OCI-LY7 (cell line): ENCODE measurements at regions of chr9 and their contacts with region 1.

Region 1: DNA sequence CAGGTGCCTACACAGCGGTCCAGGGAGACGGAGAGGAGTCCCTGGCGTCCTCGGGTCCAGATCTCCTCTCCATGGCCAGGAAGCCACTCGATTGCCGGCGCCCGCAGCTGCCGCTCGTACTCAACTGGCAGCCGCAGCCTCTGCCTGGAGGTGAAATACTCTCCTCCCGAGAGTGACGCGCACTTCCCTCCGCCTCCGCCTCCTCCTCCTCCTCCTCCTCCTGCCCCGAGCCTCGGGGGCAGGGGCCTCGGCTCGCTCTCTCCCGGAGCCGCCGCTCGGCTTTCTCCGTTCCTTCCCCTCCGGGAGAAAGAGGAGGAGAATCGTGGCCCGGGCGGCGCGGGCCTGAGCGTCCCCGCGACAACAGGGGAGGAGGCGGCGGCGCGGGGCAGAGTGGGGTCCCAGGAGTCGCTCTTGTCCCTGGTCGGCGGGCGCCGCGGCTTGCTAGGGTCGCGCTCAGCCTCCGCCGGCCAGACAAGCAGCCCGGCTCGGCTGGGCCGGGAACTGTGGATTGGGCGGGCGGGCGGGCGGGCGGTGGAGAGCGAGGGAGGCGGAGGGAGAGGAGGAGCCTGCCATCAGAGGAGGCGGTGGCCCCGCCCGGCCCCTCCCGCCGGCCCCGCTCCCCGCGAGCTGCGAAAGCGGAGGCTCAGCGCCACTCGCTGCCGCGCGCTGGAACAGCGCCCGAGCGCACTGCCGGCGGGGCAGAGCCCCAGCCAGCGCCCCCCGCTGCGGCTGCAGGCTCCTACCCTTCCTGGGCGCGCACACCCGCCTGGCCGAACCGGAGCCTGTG is at the start of gene CEMIP2:
- DNase-seq: peak; percentile 88
- H3K4me3 ChIP-seq: peak within 1 kb of the TSS; percentile 74
- H3K27ac ChIP-seq: no peak within 1 kb of the TSS
- H3K4me1 ChIP-seq: peaks cover 10% of the 10 kb centered on the region
- CTCF ChIP-seq: no peak; the same call in 1 of the 2 replicates
- total RNA-seq, gene CEMIP2: 0.90 and 1.8 TPM in 2 replicates

Region 2: DNA sequence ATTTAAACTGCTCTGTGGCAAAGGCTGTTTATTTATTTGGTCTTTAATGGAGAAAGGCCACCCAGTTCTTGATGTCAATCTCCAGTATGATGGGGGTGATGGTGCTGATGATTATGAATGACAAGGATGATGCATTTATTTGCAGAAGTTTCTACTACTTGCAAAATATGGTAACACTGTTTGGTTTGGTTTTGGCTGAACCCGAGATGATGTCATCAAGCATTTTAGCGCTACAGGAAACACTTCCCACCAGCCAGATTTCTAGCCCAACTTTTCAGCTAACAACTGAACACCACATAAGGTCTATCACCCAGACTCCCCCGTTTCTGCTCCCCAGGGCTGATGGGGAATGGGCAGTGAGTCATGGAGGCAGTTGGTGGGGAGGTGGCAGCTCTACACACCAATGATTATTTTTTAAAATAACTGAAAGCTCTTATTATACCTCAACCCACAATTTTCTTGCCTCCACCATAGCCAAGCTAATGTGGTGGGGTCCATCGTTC is 303.2 kb before region 1 on chr9:
- CTCF ChIA-PET with region 1: no interaction called
- POLR2A ChIA-PET with region 1: no interaction called
- intact Hi-C with region 1: no loop called
- DNase-seq: no peak
- H3K4me3 ChIP-seq: no peak overlapping the region
- H3K27ac ChIP-seq: no peak overlapping the region
- H3K4me1 ChIP-seq: no peaks in the 10 kb centered on the region
- CTCF ChIP-seq: no peak

Region 3: DNA sequence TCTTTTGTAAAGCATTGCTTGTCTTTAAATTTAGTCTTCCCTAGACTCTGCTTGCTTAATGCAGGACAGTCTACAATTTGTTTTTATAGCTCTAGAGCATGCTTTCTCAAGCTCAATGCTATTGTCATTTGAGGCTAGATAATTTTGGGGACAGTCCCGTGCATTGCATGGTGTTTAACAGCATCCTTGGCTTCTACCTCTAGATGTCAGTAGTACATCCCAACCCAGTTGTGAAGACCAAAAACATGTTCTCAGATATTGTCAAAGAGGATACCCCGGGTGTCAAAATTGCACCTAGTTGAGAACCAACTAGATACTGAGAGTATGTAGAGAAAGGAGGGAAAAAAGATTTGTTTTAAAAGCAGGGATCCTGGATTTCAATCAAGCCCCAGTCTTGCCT is 277.8 kb before region 1 on chr9:
- CTCF ChIA-PET with region 1: no interaction called
- POLR2A ChIA-PET with region 1: no interaction called
- intact Hi-C with region 1: loop called (anchors 5 kb)
- DNase-seq: no peak
- H3K4me3 ChIP-seq: no peak overlapping the region
- H3K27ac ChIP-seq: no peak overlapping the region
- H3K4me1 ChIP-seq: no peaks in the 10 kb centered on the region
- CTCF ChIP-seq: peak; percentile 60

Region 4: GRCh38 chr9:71524996-71525580 is 243.5 kb before region 1 on chr9:
- CTCF ChIA-PET with region 1: no interaction called
- POLR2A ChIA-PET with region 1: no interaction called
- intact Hi-C with region 1: no loop called
- DNase-seq: no peak
- H3K4me3 ChIP-seq: no peak overlapping the region
- H3K27ac ChIP-seq: no peak overlapping the region
- H3K4me1 ChIP-seq: no peaks in the 10 kb centered on the region
- CTCF ChIP-seq: no peak

Region 5: GRCh38 chr9:71604197-71605063 is 164.2 kb before region 1 on chr9:
- CTCF ChIA-PET with region 1: no interaction called
- POLR2A ChIA-PET with region 1: no interaction called
- intact Hi-C with region 1: loop called (anchors 1 kb)
- DNase-seq: peak; percentile 69
- H3K4me3 ChIP-seq: no peak overlapping the region
- H3K27ac ChIP-seq: no peak overlapping the region
- H3K4me1 ChIP-seq: no peaks in the 10 kb centered on the region
- CTCF ChIP-seq: peak; percentile 91

Region 6: GRCh38 chr9:71783120-71783530 is 14.5 kb after region 1 on chr9:
- CTCF ChIA-PET with region 1: no interaction called
- POLR2A ChIA-PET with region 1: no interaction called
- intact Hi-C with region 1: no loop called
- DNase-seq: peak; percentile 75
- H3K4me3 ChIP-seq: peak overlapping the region; percentile 31
- H3K27ac ChIP-seq: no peak overlapping the region
- H3K4me1 ChIP-seq: peaks cover 13% of the 10 kb centered on the region
- CTCF ChIP-seq: peak; percentile 60

Region 7: GRCh38 chr9:71806901-71807307 is 38.3 kb after region 1 on chr9:
- CTCF ChIA-PET with region 1: interaction called, 3 read pairs
- POLR2A ChIA-PET with region 1: interaction called, 4 read pairs
- intact Hi-C with region 1: loop called (anchors 5 kb)
- DNase-seq: peak; percentile 88
- H3K4me3 ChIP-seq: no peak overlapping the region
- H3K27ac ChIP-seq: no peak overlapping the region
- H3K4me1 ChIP-seq: peaks cover 3% of the 10 kb centered on the region
- CTCF ChIP-seq: peak; percentile 99

Region 8: DNA sequence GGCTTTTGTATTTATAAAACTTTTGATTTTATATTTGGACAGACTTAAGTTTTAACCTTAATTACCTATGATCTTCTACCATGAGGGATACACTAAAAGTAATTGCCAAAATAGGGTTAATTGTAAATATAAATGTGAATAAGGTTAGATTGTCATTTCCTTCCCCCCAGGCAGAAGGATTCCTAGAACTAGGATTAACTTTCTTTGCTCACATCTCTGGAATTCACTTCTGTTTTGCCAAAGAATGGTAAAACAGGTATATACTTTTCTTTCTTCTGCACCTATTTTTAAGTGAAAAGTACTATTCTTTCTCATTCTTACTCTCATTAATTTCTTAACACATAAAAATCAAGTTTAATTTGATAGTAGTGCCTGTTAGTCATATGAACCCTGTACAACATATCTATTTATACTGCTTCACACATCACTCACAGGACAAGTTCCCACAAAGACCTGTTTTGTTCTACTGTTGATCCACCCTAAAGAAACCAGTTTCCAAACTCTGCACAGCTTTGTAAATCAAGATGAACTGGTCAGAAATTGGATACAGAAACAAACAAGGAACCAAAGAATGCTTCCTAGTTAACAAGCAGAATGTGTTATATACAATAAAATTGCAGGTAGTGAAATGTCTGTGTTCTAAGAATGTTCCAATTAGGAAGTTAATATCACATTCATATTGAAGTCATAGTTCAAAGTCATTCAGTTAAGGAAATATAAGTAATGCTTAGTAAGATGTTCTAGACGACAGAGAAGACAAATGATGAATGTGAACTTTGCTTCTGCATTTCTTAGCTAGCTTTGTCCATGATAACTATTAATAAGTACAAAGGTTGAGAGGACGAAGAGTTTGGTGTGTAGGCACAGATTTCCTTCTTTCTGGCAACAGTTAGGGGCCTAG is 176.1 kb after region 1 on chr9:
- CTCF ChIA-PET with region 1: no interaction called
- POLR2A ChIA-PET with region 1: no interaction called
- intact Hi-C with region 1: no loop called
- DNase-seq: no peak
- H3K4me3 ChIP-seq: no peak overlapping the region
- H3K27ac ChIP-seq: no peak overlapping the region
- H3K4me1 ChIP-seq: no peaks in the 10 kb centered on the region
- CTCF ChIP-seq: no peak